ENCODE measurements at regions of chr18 and their contacts with region 1.

Region 1: GRCh38 chr18:73879766-73880165 is 267.9 kb downstream of the FBXO15 start:
- DNase-seq: no peak
- H3K4me3 ChIP-seq: no peak overlapping the region
- H3K27ac ChIP-seq: no peak overlapping the region
- H3K4me1 ChIP-seq: no peaks in the 10 kb centered on the region
- H3K27me3 ChIP-seq: no peaks in the 10 kb centered on the region
- CTCF ChIP-seq: no peak

Region 2: DNA sequence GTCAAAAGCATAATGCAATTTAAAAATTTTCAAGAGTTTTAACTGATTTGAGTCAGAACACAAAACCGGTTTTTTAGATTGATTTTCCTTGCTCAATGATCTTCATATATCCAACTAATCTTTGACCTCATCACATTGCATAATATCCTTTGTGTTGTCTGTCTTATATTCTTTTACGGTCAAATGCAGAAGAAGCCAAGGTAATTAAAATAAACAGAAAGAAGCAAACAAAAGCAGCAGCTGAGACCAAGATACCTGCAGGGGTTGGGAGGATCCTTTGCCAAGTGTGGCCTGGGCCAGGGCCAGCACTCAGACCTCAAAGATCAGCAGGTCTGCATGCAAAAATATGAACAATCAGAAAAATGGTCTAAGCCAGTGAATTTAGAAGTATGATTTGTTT is 583.1 kb before region 1 on chr18:
- CTCF ChIA-PET with region 1: no interaction called
- dilution Hi-C with region 1: no loop called
- in situ Hi-C with region 1: no loop called
- intact Hi-C with region 1: no loop called
- DNase-seq: no peak
- H3K4me3 ChIP-seq: no peak overlapping the region
- H3K27ac ChIP-seq: no peak overlapping the region
- H3K4me1 ChIP-seq: no peaks in the 10 kb centered on the region
- H3K27me3 ChIP-seq: peaks cover 5% of the 10 kb centered on the region
- CTCF ChIP-seq: no peak

Region 3: GRCh38 chr18:73842795-73843394 is 36.9 kb before region 1 on chr18:
- CTCF ChIA-PET with region 1: no interaction called
- dilution Hi-C with region 1: no loop called
- in situ Hi-C with region 1: no loop called
- intact Hi-C with region 1: no loop called
- DNase-seq: peak; percentile 14
- H3K4me3 ChIP-seq: no peak overlapping the region
- H3K27ac ChIP-seq: no peak overlapping the region
- H3K4me1 ChIP-seq: no peaks in the 10 kb centered on the region
- H3K27me3 ChIP-seq: no peaks in the 10 kb centered on the region
- CTCF ChIP-seq: peak; percentile 98 to 99

Region 4: DNA sequence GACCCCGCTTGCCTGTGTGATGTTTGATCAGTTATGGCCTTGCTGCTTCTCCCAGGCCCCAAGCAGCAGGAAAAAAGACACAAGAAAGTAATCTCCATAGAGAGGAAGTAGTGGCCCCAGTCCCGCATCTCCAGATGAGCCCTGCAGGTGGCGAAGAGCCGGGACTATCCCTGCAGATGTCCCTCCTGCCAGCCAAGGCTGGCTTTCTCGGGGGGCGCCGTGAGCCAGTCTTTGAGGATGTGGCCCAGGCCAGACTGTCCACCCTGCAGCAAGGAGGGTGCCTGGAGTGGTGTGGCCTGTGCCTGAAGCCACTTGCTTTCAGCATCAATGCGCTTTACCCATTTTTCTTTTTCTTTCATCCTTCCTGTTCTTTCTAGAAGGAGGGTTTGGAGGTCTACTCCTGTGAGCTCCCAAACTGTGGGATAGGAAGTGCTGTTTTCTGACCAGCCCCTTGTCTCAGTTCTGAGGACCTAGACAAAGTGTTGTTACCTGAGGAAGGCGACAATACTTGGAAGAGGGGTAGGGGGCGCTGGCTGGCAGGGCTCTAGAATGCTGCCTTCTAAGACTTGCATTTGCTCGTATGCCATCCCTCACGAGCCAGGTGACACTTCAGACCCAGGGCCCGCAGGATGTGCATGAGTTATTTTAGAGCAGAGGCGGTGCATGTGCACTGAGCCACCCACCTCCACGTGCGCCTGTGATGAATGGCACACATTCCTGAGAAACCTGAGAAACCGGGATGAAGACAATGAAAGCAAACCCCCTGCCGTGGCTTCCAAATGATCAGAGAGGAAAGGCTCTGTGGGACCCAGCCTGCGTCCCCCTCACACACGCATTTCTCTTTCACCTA is 12.0 kb after region 1 on chr18:
- CTCF ChIA-PET with region 1: no interaction called
- dilution Hi-C with region 1: no loop called
- in situ Hi-C with region 1: no loop called
- intact Hi-C with region 1: no loop called
- DNase-seq: no peak
- H3K4me3 ChIP-seq: no peak overlapping the region
- H3K27ac ChIP-seq: no peak overlapping the region
- H3K4me1 ChIP-seq: no peaks in the 10 kb centered on the region
- H3K27me3 ChIP-seq: no peaks in the 10 kb centered on the region
- CTCF ChIP-seq: no peak

Region 5: GRCh38 chr18:73952296-73952946 is 72.7 kb after region 1 on chr18:
- CTCF ChIA-PET with region 1: no interaction called
- dilution Hi-C with region 1: loop called (anchors 5 kb)
- in situ Hi-C with region 1: no loop called
- intact Hi-C with region 1: no loop called
- DNase-seq: no peak
- H3K4me3 ChIP-seq: no peak overlapping the region
- H3K27ac ChIP-seq: no peak overlapping the region
- H3K4me1 ChIP-seq: no peaks in the 10 kb centered on the region
- H3K27me3 ChIP-seq: peaks cover 4% of the 10 kb centered on the region
- CTCF ChIP-seq: no peak